Upper lobe of right lung (tissue), 1 donor: ENCODE measurements at regions of chr12 and their contacts with region 1.

Region 1: GRCh38 chr12:71000255-71000654 is 79.7 kb upstream of the PTPRR start:
- DNase-seq: no peak
- ATAC-seq: no peak
- H3K4me3 ChIP-seq: no peak overlapping the region
- H3K27ac ChIP-seq: no peak overlapping the region
- H3K4me1 ChIP-seq: no peaks in the 10 kb centered on the region
- H3K27me3 ChIP-seq: no peaks in the 10 kb centered on the region
- CTCF ChIP-seq: no peak

Region 2: DNA sequence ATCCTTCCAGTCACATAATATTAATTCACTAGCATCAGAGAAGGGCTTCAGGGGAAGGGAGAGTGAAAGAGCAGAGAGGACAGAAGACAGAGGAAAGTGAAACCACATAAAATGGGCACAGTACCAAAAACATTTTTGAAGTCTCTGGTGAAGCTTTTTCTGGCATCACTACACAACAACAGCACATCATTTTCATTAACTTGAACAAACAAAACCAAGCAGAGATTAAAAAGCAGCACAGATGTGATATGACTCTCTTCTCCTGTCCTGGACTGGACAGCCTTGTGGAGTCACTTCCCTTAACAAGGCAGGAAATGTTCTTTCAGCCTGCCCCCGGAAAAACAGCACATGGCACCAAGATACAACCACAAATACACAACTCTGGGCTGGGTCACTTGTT is 45.5 kb after region 1 on chr12:
- intact Hi-C with region 1: loop called (anchors 1 kb)
- DNase-seq: no peak
- ATAC-seq: no peak
- H3K4me3 ChIP-seq: no peak overlapping the region
- H3K27ac ChIP-seq: peak overlapping the region; percentile 63
- H3K4me1 ChIP-seq: no peaks in the 10 kb centered on the region
- H3K27me3 ChIP-seq: no peaks in the 10 kb centered on the region
- CTCF ChIP-seq: no peak